ENCODE measurements at regions of chr9 and their contacts with region 1.

Region 1: DNA sequence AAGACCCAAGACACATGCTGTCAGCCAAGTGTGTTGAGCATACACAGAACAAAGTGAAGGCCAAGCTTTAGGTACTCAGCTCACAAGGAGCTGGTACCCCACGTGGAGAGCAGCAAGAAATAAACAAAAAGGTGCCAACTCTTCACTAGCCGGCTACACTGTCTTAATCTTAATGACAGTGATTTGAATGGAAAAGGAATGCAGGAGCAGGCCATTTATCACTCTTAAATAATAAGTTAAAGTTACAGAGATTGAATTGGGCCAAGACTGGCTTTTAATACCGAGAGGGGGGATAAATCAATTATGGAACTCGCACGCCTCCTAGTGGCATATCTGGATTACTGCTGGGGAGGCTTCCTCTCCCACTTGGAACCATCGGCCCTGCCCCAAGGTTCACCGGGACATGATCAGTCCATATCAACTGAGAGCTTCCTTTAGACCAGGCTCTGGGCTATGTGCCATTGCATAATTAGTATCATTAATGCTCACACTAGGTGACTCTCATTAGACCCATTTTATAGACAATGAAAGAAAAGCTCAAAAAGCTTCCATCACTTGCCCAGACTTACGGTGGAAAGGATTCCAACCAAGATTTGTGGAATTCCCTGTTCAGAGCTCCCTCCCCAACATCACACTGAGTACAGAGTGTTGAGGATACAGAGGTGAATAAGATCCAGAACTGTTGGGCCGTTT is 94.0 kb downstream of the ACTL7B start:
- DNase-seq: peak; percentile 51
- ATAC-seq: peak; percentile 55
- H3K4me3 Mint-ChIP-seq: no peak overlapping the region
- H3K27ac Mint-ChIP-seq: no peak overlapping the region
- H3K4me1 Mint-ChIP-seq: no peaks in the 10 kb centered on the region
- H3K27me3 Mint-ChIP-seq: peaks cover 1% of the 10 kb centered on the region
- CTCF ChIP-seq: peak; percentile 81

Region 2: GRCh38 chr9:108565651-108566378 is 196.0 kb before region 1 on chr9:
- CTCF ChIA-PET with region 1: interaction called, 3 read pairs
- POLR2A ChIA-PET with region 1: no interaction called
- intact Hi-C with region 1: loop called (anchors 10 kb)
- DNase-seq: peak; percentile 27
- ATAC-seq: no peak
- H3K4me3 Mint-ChIP-seq: no peak overlapping the region
- H3K27ac Mint-ChIP-seq: no peak overlapping the region
- H3K4me1 Mint-ChIP-seq: no peaks in the 10 kb centered on the region
- H3K27me3 Mint-ChIP-seq: peaks cover 9% of the 10 kb centered on the region
- CTCF ChIP-seq: peak; percentile 76